CD4-positive, alpha-beta memory T cell (primary cell): ENCODE measurements at regions of chr19 and their contacts with region 1.

Region 1: DNA sequence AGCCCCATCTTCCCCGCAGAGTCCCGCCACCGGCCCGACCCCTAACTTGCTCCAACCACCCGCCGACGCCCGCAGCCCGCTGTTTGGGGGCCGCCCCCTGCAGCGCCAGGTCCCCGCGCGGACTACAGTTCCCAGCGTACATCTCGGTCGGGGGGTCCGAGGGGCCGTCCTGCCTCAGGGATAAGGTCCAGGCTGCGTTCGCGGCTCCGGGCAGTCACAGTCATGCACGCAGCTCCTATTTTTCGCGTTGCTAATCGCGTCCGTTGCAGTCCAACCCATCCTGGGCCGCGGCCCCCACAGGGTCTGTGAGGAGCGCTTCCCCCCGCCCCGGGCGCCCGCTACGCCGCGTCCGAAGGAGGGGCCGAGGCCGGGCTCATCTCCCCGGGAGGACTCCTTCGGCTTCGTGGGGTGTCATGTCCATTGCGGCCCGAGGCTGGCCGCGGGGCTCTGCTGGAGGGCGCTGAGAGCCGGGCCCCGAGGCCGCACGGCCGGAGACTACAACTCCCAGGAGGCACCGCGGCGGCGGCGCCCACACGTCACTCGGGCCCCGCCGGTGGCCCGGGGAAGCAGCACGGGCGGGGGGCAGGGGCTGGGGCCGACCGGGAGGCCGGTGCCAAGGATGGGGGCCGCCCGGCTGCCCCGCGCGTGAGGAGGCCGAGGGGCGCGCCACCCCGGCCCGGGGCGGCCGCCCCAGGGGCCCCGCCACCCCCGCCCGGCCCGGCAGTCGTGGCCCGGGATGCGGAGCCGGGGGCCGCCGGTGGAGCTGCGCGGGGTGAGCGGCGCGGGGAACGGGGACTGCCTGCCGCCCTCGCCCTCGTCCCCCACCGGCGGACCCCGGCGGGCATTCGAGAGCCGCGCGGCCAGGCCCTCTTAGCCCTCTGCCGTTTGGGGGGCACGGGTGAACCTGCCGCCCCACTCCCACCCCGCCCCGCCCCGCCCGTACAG is at the start of gene MAP3K10:
- DNase-seq: peak; percentile 67 to 77 (median 70)
- H3K4me3 ChIP-seq: peak within 1 kb of the TSS; percentile 66 to 95
- H3K4me3 Mint-ChIP-seq: peak within 1 kb of the TSS; percentile 87 to 94 (median 91)
- H3K27ac ChIP-seq: peak within 1 kb of the TSS; percentile 96
- H3K27ac Mint-ChIP-seq: peak within 1 kb of the TSS; percentile 92 to 98 (median 96)
- H3K4me1 ChIP-seq: peaks cover 19% of the 10 kb centered on the region
- H3K4me1 Mint-ChIP-seq: peaks cover 22 to 40% (median 29%) of the 10 kb centered on the region in 4 donors
- H3K27me3 ChIP-seq: no peaks in the 10 kb centered on the region
- H3K27me3 Mint-ChIP-seq: no peaks in the 10 kb centered on the region
- total RNA-seq, gene MAP3K10: 28.4 to 30.2 TPM

Region 2: GRCh38 chr19:40285353-40286234 is 94.4 kb after region 1 on chr19:
- CTCF ChIA-PET with region 1: no interaction called
- POLR2A ChIA-PET with region 1: no interaction called
- intact Hi-C with region 1: loop called (anchors 1 kb)
- DNase-seq: peak; percentile 97 to 100 (median 100)
- H3K4me3 ChIP-seq: peak overlapping the region; percentile 45 to 58
- H3K4me3 Mint-ChIP-seq: peak overlapping the region; percentile 84 to 98 (median 92)
- H3K27ac ChIP-seq: peak overlapping the region; percentile 88
- H3K27ac Mint-ChIP-seq: peak overlapping the region; percentile 93 to 99 (median 98)
- H3K4me1 ChIP-seq: peaks cover 49% of the 10 kb centered on the region
- H3K4me1 Mint-ChIP-seq: peaks cover 26 to 56% (median 40%) of the 10 kb centered on the region in 4 donors
- H3K27me3 ChIP-seq: no peaks in the 10 kb centered on the region
- H3K27me3 Mint-ChIP-seq: no peaks in the 10 kb centered on the region